Panc1 (cell line): ENCODE measurements at regions of chr4 and their contacts with region 1.

Region 1: GRCh38 chr4:123821861-123822260 is 425.3 kb downstream of the SPRY1 start:
- DNase-seq: no peak
- ATAC-seq: no peak
- H3K4me3 ChIP-seq: no peak overlapping the region
- H3K27ac ChIP-seq: no peak overlapping the region
- H3K4me1 ChIP-seq: no peaks in the 10 kb centered on the region
- H3K27me3 ChIP-seq: no peaks in the 10 kb centered on the region
- CTCF ChIP-seq: no peak

Region 2: DNA sequence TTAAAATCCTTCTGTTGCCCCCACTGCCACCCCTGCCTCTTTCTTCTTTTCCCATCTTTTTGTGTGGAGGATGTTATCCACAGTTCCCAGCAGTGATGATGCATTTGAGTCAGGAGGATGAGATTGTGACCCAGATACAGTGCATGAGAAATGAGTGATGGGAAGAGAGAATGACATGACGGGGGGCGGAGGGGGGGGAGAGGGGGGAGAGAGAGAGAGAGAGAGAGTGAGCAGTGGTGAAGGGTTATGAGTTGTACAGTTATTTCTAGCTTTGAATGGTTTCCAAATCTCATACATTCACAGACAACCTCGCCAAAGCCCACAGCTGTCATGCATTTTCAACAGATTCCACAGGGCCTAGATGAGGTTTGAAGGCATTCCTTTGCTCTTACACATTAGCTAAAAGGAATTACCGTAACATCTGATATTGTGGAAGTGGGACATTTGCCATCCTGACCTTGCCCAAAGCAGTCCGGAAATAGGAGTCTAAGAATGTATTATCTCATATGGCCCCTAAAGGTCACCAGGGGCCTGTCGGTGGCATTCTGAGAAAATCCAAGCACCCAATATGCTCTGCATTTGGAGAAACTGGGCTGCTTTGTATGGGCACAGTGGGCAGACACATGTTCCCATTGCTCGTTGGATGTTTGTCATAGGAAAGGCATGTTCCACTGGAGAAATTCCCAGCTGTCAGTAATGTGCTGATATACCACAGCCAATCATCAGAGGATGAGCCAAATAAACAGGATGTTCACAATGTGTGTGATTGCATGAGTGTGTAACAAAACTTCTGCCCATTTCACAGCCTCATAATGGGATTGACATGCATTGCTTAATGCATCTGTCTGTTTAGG is 10.5 kb after region 1 on chr4:
- CTCF ChIA-PET with region 1: interaction called, 14 read pairs
- POLR2A ChIA-PET with region 1: no interaction called
- in situ Hi-C with region 1: no loop called
- intact Hi-C with region 1: no loop called
- DNase-seq: peak; percentile 60
- ATAC-seq: peak; percentile 38; the same call in 1 of the 2 replicates
- H3K4me3 ChIP-seq: no peak overlapping the region
- H3K27ac ChIP-seq: peak overlapping the region; percentile 39; the same call in 1 of the 2 replicates
- H3K4me1 ChIP-seq: no peaks in the 10 kb centered on the region
- H3K27me3 ChIP-seq: no peaks in the 10 kb centered on the region
- CTCF ChIP-seq: no peak

Region 3: DNA sequence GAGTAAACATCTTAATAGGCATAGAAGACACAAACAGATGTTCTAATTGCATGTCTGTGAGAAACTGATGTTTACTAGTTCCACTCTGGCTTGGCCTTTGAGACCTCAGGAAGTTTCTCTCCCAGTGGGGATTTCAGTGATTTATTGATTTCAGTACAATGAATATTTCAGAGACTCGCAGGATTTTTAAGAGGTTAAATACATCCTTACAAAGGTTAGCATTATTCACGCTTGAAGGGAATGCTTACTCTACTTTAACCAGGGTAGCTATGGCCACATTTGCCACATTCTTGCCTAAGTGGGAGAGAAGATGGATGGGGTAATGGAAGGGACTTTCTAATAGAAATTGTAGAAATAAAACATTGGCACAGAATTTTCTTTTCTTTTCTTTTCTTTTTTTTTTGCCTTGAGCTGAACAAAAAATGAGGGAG is 54.8 kb after region 1 on chr4:
- CTCF ChIA-PET with region 1: no interaction called
- POLR2A ChIA-PET with region 1: no interaction called
- in situ Hi-C with region 1: no loop called
- intact Hi-C with region 1: no loop called
- DNase-seq: no peak
- ATAC-seq: no peak
- H3K4me3 ChIP-seq: no peak overlapping the region
- H3K27ac ChIP-seq: no peak overlapping the region
- H3K4me1 ChIP-seq: no peaks in the 10 kb centered on the region
- H3K27me3 ChIP-seq: no peaks in the 10 kb centered on the region
- CTCF ChIP-seq: no peak

Region 4: DNA sequence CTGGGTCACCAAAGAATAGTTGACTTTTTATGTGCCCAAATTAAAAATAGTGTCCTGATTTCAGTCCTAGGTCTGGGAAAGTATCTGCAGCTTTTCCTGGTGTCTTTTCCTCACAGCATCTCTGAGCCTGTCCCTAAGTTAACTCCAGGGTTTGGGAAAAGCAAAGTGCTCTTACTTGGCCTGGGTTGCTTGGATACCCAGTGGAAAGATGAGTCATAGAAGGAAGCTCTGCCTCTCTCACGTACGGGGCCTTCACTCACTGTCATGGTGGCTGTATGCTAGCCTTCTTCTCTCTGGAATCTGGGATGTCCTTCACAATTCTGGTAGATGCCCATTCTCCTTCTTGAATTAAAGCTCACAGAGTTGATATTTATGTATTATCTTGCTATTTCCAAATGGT is 283.4 kb after region 1 on chr4:
- CTCF ChIA-PET with region 1: no interaction called
- POLR2A ChIA-PET with region 1: interaction called, 14 read pairs
- in situ Hi-C with region 1: no loop called
- intact Hi-C with region 1: no loop called
- DNase-seq: no peak
- ATAC-seq: no peak
- H3K4me3 ChIP-seq: no peak overlapping the region
- H3K27ac ChIP-seq: peak overlapping the region; percentile 7; the same call in 1 of the 2 replicates
- H3K4me1 ChIP-seq: no peaks in the 10 kb centered on the region
- H3K27me3 ChIP-seq: no peaks in the 10 kb centered on the region
- CTCF ChIP-seq: no peak